Posterior vena cava (tissue), 2 donors: ENCODE measurements at regions of chr4 and their contacts with region 1.

Region 1: DNA sequence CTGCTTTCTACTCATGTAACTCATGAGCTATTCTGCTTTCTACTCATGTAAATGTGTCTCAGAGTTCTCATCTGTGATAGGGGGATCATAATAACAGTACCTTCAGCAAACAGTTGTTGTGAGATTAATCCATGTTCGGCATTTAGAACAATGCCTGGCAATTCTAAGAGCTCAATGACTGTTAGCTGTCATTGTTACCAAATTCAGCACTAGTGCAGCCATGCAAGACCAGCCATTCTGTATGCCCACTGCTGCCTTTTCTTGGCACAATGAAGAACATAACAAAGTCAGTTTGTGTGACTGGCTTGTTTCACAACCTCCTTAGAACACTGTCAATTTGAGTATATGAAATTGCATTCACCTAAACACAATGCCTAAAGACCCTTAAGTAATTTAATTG is 163.2 kb downstream of the ANK2 start:
- DNase-seq: no peak

Region 2: GRCh38 chr4:112616984-112617383 is 595.6 kb before region 1 on chr4:
- intact Hi-C with region 1: loop called in 1 of 2 experiments (anchors 10 kb)
- DNase-seq: no peak